Activated CD4-positive, alpha-beta T cell treated with anti-CD3 and anti-CD28 coated beads for 36 hours (primary cell): ENCODE measurements at regions of chr6 and their contacts with region 1.

Region 1: GRCh38 chr6:52284460-52285176 is at the start of gene MCM3:
- DNase-seq: peak; percentile 98
- ATAC-seq: peak; percentile 97
- H3K4me3 Mint-ChIP-seq: no peak within 1 kb of the TSS
- H3K27ac Mint-ChIP-seq: peak within 1 kb of the TSS; percentile 82
- H3K4me1 Mint-ChIP-seq: peaks cover 47% of the 10 kb centered on the region
- H3K27me3 Mint-ChIP-seq: no peaks in the 10 kb centered on the region
- total RNA-seq, gene MCM3: 276 to 279 TPM

Region 2: DNA sequence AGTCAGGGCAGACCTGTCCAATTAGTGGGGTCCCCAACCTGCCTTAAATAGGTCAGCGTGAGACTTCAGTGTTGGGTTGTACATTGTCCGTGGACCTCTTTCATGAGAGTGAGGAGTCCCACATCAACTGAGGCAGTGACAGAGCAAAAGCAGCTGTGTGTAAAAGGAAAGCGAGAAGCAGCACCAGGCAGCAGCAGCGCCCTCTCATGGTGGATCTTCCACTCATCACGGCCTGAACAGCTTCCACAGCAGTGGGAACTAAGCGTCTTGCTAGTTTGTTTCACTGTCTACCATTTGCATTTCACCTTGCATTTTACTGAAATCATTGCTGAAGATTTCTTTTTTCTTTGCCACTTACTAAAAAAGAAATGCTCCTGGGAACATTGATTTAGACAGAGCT is 531.0 kb before region 1 on chr6:
- CTCF ChIA-PET with region 1: no interaction called
- POLR2A ChIA-PET with region 1: no interaction called
- intact Hi-C with region 1: no loop called
- DNase-seq: peak; percentile 30
- ATAC-seq: no peak
- H3K4me3 Mint-ChIP-seq: no peak overlapping the region
- H3K27ac Mint-ChIP-seq: no peak overlapping the region
- H3K4me1 Mint-ChIP-seq: no peaks in the 10 kb centered on the region
- H3K27me3 Mint-ChIP-seq: no peaks in the 10 kb centered on the region

Region 3: DNA sequence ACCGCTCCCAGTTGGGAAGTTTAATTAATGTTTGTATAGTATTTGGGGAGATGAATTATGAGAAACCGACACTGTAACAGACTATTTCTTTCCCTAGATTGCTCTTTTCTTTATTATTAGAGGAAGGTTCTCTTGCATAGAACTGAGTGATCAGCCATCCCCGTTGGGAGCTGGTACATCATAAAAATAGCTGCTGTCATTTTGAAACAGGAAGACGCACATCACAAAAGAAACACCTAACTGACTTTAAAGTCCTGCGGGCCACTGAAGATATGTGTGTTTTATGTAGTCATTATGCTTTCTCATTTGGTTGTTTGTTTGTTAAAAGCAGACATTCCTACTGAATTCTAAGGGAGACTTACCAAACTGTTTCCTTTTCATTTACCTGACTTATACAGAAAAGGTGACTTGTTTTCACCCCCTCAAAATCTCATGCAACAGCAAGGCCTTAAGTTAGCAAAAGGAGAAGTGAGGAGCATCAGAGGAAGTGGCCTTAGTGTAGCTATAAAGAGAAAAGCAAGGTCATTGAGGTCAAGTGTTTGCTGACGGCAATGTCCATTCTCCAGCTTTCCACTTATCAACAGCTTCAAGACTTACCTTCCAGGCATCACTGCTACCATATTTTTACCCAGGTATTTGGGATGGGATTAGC is 288.2 kb before region 1 on chr6:
- CTCF ChIA-PET with region 1: no interaction called
- POLR2A ChIA-PET with region 1: no interaction called
- intact Hi-C with region 1: no loop called
- DNase-seq: no peak
- ATAC-seq: no peak
- H3K4me3 Mint-ChIP-seq: no peak overlapping the region
- H3K27ac Mint-ChIP-seq: no peak overlapping the region
- H3K4me1 Mint-ChIP-seq: no peaks in the 10 kb centered on the region
- H3K27me3 Mint-ChIP-seq: peaks cover 12% of the 10 kb centered on the region

Region 4: DNA sequence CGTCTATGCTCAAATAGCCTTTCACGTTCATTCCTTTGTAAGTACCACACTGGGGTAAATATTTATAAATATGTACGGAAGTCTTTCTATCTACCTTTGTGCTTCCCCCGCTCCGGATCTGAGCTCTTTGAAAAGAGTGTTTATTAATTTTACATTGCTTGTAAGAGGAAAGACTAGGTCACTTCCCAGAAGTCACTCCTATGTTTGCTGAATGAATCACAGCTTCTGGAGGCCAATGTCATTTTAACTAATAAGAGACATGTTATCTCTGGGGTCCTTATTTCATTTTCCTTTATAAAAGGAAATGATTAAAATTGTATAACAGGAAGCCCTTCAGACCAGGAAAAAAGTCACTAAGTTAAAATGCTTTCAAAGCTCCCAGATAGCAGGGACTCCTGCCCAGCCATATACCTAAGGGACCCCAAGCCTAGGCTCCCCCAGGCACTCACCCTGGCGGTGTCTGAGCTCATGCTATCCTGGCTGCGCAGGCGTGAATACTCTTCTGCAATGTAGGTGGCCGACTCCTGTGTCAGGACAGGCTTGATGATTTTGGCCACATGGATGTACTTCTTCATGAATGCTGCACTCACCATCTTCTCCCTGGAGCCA is 12.7 kb before region 1 on chr6:
- CTCF ChIA-PET with region 1: interaction called, 10 read pairs
- POLR2A ChIA-PET with region 1: interaction called, 3 read pairs
- intact Hi-C with region 1: no loop called
- DNase-seq: no peak
- ATAC-seq: no peak
- H3K4me3 Mint-ChIP-seq: no peak overlapping the region
- H3K27ac Mint-ChIP-seq: no peak overlapping the region
- H3K4me1 Mint-ChIP-seq: peaks cover 15% of the 10 kb centered on the region
- H3K27me3 Mint-ChIP-seq: no peaks in the 10 kb centered on the region

Region 5: GRCh38 chr6:52361945-52362442 is 77.4 kb after region 1 on chr6 and contains the start of gene PAQR8:
- CTCF ChIA-PET with region 1: interaction called, 30 read pairs
- POLR2A ChIA-PET with region 1: interaction called, 6 read pairs
- intact Hi-C with region 1: loop called (anchors 1 kb)
- DNase-seq: peak; percentile 88
- ATAC-seq: peak; percentile 89
- H3K4me3 Mint-ChIP-seq: peak within 1 kb of the TSS; percentile 99
- H3K27ac Mint-ChIP-seq: peak within 1 kb of the TSS; percentile 94
- H3K4me1 Mint-ChIP-seq: peaks cover 42% of the 10 kb centered on the region
- H3K27me3 Mint-ChIP-seq: no peaks in the 10 kb centered on the region
- total RNA-seq, gene PAQR8: 9.0 to 9.1 TPM

Region 6: GRCh38 chr6:52407467-52407866 is 122.8 kb after region 1 on chr6:
- CTCF ChIA-PET with region 1: interaction called, 153 read pairs
- POLR2A ChIA-PET with region 1: interaction called, 6 read pairs
- intact Hi-C with region 1: no loop called
- DNase-seq: no peak
- ATAC-seq: peak; percentile 87
- H3K4me3 Mint-ChIP-seq: no peak overlapping the region
- H3K27ac Mint-ChIP-seq: no peak overlapping the region
- H3K4me1 Mint-ChIP-seq: peaks cover 14% of the 10 kb centered on the region
- H3K27me3 Mint-ChIP-seq: no peaks in the 10 kb centered on the region

Region 7: GRCh38 chr6:52664186-52664990 is 379.8 kb after region 1 on chr6:
- CTCF ChIA-PET with region 1: interaction called, 5 read pairs
- POLR2A ChIA-PET with region 1: no interaction called
- intact Hi-C with region 1: loop called (anchors 1 to 5 kb)
- DNase-seq: peak; percentile 86
- ATAC-seq: peak; percentile 99
- H3K4me3 Mint-ChIP-seq: no peak overlapping the region
- H3K27ac Mint-ChIP-seq: no peak overlapping the region
- H3K4me1 Mint-ChIP-seq: peaks cover 11% of the 10 kb centered on the region
- H3K27me3 Mint-ChIP-seq: no peaks in the 10 kb centered on the region

Region 8: GRCh38 chr6:53348371-53349208 is 1064.0 kb after region 1 on chr6 and contains the start of gene ELOVL5:
- CTCF ChIA-PET with region 1: no interaction called
- POLR2A ChIA-PET with region 1: no interaction called
- intact Hi-C with region 1: loop called in 1 of 2 experiments (anchors 10 kb)
- DNase-seq: peak; percentile 99
- ATAC-seq: peak; percentile 79
- H3K4me3 Mint-ChIP-seq: peak within 1 kb of the TSS; percentile 93
- H3K27ac Mint-ChIP-seq: peak within 1 kb of the TSS; percentile 91
- H3K4me1 Mint-ChIP-seq: peaks cover 46% of the 10 kb centered on the region
- H3K27me3 Mint-ChIP-seq: no peaks in the 10 kb centered on the region
- total RNA-seq, gene ELOVL5: 98.1 to 106 TPM